Heart right ventricle (tissue), 16 donors: ENCODE measurements at regions of chr6 and their contacts with region 1.

Region 1: DNA sequence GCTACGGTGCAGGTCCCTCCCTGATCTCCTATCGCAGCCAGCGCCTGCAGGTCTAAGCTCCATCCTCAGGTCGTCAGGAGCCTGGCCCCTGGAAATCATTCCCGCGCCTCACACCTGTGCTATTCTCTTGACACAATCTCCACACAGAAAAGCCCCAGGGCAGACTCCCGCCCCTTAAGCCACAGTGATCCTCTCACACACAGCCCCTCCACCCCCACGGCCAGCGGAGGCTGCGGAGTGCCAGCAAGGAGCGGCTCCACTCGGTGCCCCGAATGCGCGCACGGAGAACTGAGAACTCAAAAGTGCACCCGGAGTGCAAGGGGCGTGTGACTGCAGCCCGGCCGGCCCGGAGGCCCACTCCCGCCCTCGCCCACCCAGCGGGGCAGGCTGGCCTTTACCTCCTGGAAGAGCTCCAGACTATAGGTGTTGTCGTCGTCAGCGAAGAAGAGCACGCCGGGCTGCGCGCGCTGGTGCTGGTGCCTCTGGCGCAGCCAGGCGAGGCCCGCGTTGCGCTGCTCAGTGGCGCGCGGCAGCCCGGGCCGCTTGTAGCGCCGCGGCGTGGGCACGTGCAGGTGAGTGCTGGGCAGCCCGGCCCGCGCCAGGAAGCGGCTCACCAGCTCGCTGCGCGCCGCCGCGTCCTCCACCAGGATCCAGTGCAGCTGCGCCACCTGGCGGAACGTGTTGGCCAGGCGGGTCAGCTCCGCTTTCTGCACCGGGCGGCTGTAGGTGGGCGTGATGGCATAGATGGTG is 1.2 kb downstream of the B3GAT2 start:
- DNase-seq: peak; percentile 77 to 87
- ATAC-seq: peak; percentile 88 to 97 (median 94)
- H3K4me3 ChIP-seq: peak overlapping the region; percentile 49 to 66 (median 60)
- H3K27ac ChIP-seq: no peak overlapping the region
- H3K4me1 ChIP-seq: peaks cover 6 to 24% (median 15%) of the 10 kb centered on the region in 9 donors
- H3K27me3 ChIP-seq: peaks cover 8 to 87% (median 43%) of the 10 kb centered on the region in 7 donors
- CTCF ChIP-seq: peak; percentile 70 to 93 (median 86)

Region 2: DNA sequence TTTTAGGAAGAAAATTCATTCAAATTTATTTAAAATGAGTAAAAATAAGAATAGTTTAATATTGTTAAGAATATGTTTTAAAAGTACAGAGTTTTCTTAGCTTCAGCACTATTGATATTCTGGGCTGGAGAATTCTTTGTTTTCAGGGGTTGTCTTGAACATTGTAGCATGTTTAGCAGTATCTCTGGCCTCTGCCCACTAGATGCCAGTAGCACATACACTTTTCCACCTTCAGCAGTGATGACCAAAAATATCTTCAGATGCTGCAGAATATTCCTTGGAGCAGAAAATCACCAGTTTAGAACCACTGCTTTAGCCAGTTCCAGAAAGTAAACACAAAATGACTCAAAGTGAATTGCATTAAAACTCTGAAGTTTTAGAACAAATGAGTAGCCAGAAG is 408.3 kb before region 1 on chr6:
- intact Hi-C with region 1: loop called in 2 of 10 experiments (anchors 10 kb)
- DNase-seq: no peak
- ATAC-seq: peak; percentile 58 to 85 (median 72)
- H3K4me3 ChIP-seq: no peak overlapping the region
- H3K27ac ChIP-seq: no peak overlapping the region
- H3K4me1 ChIP-seq: peaks cover 0 to 5% (median 0%) of the 10 kb centered on the region in 9 donors
- H3K27me3 ChIP-seq: no peaks in the 10 kb centered on the region
- CTCF ChIP-seq: peak in 7 of 9 donors; percentile 37 to 67 (median 52)

Region 3: DNA sequence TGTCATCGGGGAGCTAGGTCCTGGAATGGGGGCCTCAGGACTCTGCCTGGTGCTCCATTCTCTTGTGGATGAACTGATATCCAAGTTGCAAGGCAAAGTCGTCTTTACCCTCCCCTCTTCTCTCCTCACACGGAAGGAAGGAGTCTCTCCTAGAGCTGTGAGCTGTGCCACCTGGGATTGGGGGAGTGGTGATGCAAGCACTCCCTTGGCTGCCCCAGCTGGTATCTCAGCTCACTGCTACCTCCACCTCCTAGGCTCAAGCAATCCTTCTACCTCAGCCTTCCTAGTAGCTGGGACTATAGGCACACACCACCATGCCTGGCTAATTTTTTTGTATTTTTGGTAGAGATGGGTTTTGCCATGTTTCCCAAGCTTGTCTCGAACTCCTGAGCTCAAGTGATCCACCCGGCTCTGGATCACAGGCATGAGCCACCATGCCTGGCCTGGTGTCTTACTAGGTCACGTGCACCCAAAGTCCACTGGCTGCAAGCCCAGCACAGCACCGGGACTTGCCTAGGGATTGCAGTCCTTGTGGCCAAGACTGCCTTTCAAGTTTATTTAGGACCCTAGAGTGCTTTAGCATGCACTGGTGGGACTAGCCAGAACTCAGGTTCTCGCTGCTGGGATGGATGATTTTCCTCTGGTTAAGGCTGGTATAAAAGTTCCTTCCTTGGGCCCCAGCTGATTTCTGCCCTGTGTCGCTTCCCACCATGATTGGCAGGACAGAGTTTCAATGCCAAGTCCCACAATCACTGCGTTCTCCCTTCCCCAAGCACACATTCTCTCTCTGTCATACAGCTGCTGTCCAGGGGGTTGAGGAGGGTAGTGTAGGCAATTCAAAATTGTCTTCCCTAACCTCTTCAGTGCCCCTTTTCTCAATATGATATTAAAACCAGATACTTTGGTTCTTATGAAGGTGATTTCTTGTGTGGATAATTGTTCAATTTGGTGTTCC is 254.4 kb before region 1 on chr6:
- intact Hi-C with region 1: loop called in 4 of 10 experiments (anchors 2 to 10 kb)
- DNase-seq: peak; percentile 32 to 42
- ATAC-seq: peak in 6 of 8 donors; percentile 59 to 86 (median 80)
- H3K4me3 ChIP-seq: no peak overlapping the region
- H3K27ac ChIP-seq: no peak overlapping the region
- H3K4me1 ChIP-seq: peaks cover 0 to 48% (median 16%) of the 10 kb centered on the region in 9 donors
- H3K27me3 ChIP-seq: no peaks in the 10 kb centered on the region
- CTCF ChIP-seq: no peak

Region 4: GRCh38 chr6:70706491-70707123 is 249.0 kb before region 1 on chr6:
- intact Hi-C with region 1: loop called in 4 of 10 experiments (anchors 2 to 10 kb)
- DNase-seq: no peak
- ATAC-seq: no peak
- H3K4me3 ChIP-seq: no peak overlapping the region
- H3K27ac ChIP-seq: no peak overlapping the region
- H3K4me1 ChIP-seq: peaks cover 0 to 38% (median 17%) of the 10 kb centered on the region in 9 donors
- H3K27me3 ChIP-seq: no peaks in the 10 kb centered on the region
- CTCF ChIP-seq: peak; percentile 55 to 80 (median 68)

Region 5: GRCh38 chr6:70884074-70884983 is 71.3 kb before region 1 on chr6:
- intact Hi-C with region 1: loop called in 1 of 10 experiments (anchors 10 kb)
- DNase-seq: peak; percentile 38 to 63
- ATAC-seq: peak; percentile 62 to 89 (median 86)
- H3K4me3 ChIP-seq: no peak overlapping the region
- H3K27ac ChIP-seq: no peak overlapping the region
- H3K4me1 ChIP-seq: no peaks in the 10 kb centered on the region
- H3K27me3 ChIP-seq: peaks cover 0 to 8% (median 0%) of the 10 kb centered on the region in 7 donors
- CTCF ChIP-seq: peak; percentile 84 to 97 (median 94)